ENCODE measurements at regions of chr13 and their contacts with region 1.

Region 1: DNA sequence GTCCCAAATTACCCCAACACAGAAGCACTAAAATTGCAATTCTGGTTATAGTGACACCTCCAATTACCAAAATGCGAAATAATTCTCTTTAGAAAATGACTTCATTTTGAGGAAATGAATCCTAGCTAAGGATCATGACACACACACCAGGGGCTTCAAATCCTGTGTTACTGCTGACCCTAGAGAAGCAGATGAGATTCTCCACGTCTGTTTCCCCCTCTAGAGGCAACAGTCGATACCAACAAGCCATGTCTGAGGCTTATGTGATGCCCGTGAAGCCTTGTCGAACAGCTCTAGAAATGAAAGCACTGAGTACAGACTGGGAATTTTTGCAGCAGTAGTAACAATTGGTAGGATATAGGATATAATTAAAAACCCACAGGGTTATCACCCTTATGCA is 153.6 kb upstream of the TMTC4 start:
- DNase-seq: no peak
- ATAC-seq: peak; percentile 97
- H3K4me3 Mint-ChIP-seq: no peak overlapping the region
- H3K27ac Mint-ChIP-seq: no peak overlapping the region
- H3K4me1 Mint-ChIP-seq: peaks cover 10% of the 10 kb centered on the region
- H3K27me3 Mint-ChIP-seq: peaks cover 3% of the 10 kb centered on the region
- CTCF ChIP-seq: no peak

Region 2: DNA sequence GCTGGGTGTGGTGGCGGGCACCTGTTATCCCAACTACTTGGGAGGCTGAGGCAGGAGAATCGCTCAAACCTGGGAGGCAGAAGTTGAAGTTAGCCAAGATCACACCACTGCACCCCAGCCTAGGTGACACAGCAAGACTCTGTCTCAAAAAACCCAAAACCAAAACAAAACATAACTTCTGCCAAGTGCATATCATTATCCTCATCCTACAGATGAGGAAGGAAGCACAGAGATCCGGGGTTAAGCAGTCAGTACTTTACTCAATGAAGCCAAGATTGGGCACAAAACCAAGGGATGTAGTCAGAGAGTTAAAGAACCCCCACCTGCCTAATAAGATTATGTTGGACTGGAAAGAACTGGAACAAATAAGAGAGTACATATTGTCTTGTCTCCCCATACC is 148.1 kb before region 1 on chr13:
- CTCF ChIA-PET with region 1: no interaction called
- POLR2A ChIA-PET with region 1: no interaction called
- DNase-seq: no peak
- ATAC-seq: no peak
- H3K4me3 Mint-ChIP-seq: no peak overlapping the region
- H3K27ac Mint-ChIP-seq: no peak overlapping the region
- H3K4me1 Mint-ChIP-seq: peaks cover 13% of the 10 kb centered on the region
- H3K27me3 Mint-ChIP-seq: peaks cover 7% of the 10 kb centered on the region
- CTCF ChIP-seq: no peak

Region 3: GRCh38 chr13:100721885-100722512 is 106.2 kb before region 1 on chr13:
- CTCF ChIA-PET with region 1: interaction called, 15 read pairs
- POLR2A ChIA-PET with region 1: no interaction called
- DNase-seq: peak; percentile 76
- ATAC-seq: peak; percentile 72
- H3K4me3 Mint-ChIP-seq: no peak overlapping the region
- H3K27ac Mint-ChIP-seq: no peak overlapping the region
- H3K4me1 Mint-ChIP-seq: peaks cover 8% of the 10 kb centered on the region
- H3K27me3 Mint-ChIP-seq: no peaks in the 10 kb centered on the region; the same call in 1 of the 2 replicates
- CTCF ChIP-seq: peak; percentile 60

Region 4: GRCh38 chr13:100815476-100816046 is 12.7 kb before region 1 on chr13:
- CTCF ChIA-PET with region 1: interaction called, 10 read pairs
- POLR2A ChIA-PET with region 1: no interaction called
- DNase-seq: no peak
- ATAC-seq: peak; percentile 91
- H3K4me3 Mint-ChIP-seq: no peak overlapping the region
- H3K27ac Mint-ChIP-seq: peak overlapping the region; percentile 61
- H3K4me1 Mint-ChIP-seq: peaks cover 36% of the 10 kb centered on the region
- H3K27me3 Mint-ChIP-seq: no peaks in the 10 kb centered on the region
- CTCF ChIP-seq: no peak